A549 (cell line): ENCODE measurements at regions of chr22 and their contacts with region 1.

Region 1: DNA sequence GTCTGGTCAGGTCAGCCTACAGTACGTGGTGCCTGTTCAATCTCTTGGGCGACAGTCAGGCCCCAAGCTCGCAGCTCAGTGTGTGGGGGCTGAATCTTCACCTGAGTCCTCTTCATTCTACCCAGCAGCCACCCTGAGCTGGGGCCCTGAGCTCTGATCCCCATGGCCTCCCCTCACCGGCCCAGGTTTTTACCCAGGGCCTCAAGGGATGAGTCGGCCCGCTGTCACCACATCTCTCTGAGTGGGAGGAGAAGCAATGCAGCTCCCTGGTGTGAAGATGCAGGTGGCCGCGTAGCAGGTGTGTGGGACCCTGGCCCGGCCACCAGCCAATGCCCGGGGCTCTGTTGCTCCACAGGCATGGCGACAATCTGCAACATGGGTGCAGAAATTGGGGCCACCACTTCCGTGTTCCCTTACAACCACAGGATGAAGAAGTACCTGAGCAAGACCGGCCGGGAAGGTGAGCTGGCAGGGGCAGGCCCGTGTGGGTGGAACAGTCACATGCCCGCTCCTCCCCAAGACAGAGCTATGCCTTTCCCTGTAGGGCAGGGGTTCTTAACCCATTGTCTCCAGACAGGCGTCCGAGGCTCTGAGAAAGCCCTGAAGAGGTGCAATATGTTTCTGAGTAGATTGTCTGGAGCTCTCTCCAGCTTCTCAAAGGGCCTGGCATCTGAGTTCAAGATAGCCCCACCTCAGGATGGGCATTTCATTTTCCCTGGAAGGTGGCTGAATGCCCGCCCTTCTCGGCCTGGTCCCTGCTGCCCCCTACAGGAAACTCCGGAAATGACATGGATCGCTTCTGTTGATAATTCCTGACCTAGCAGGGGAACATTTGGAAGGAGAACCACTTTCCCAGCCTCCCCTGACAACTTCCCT is 26.9 kb downstream of the POLR3H start:
- DNase-seq: peak; percentile 48 to 63
- ATAC-seq: peak; percentile 43 to 68
- H3K4me3 ChIP-seq: no peak overlapping the region
- H3K27ac ChIP-seq: no peak overlapping the region; a peak in 1 of 6 replicates
- H3K4me1 ChIP-seq: peaks cover 11% of the 10 kb centered on the region
- CTCF ChIP-seq: peak; percentile 70
- EP300 ChIP-seq: no peak
- POLR2A ChIP-seq: no peak
- RAD21 ChIP-seq: peak; percentile 81 to 91

Region 2: DNA sequence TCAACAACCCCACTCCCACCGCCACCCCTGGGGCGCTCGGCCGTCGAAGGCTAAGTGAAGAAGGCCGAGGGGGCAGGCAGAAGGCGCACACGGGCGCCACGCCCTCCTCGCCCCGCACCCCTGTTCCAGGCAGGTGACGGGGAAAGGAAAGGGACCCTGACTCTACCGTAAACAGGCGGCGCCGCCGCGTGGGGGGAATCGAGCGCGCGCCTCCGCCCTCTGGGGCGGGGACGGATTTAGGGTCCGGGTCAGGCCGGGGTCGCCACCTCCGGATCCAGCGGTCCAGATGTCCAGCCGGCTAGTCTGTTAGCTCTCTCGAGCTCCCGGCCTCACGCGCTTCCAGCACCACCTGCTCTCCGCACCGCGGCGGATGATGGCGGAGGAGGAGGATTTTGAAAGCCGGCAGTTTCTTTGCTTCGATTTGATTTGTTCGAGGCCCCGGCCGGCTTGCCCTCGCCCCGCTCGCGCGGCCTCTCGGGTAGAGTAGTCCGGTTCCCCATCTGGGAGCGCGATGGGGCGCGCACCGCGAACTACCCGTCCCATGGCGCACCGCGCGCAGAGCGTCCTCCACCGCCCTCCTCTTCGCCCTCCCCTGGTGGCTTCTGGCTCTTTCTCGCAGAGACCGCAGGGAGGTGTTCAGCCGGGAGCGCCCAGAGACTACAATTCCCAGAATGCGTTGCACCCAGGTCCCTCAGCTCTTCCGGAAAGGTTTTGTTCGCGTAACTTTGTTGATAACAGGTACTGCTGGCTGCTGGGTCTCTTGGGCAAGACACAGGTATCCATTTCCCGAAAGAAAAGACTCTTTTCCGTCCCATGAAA is 231.4 kb before region 1 on chr22 and contains the start of gene RANGAP1:
- CTCF ChIA-PET with region 1: no interaction called
- POLR2A ChIA-PET with region 1: no interaction called
- DNase-seq: peak; percentile 92 to 96
- ATAC-seq: peak; percentile 95 to 97
- H3K4me3 ChIP-seq: peak within 1 kb of the TSS; percentile 97
- H3K27ac ChIP-seq: peak within 1 kb of the TSS; percentile 93 to 96
- H3K4me1 ChIP-seq: peaks cover 52% of the 10 kb centered on the region
- CTCF ChIP-seq: no peak
- EP300 ChIP-seq: no peak
- POLR2A ChIP-seq: peak; percentile 72
- RAD21 ChIP-seq: 0 out of 5 replicates have a peak, but pooled peaks of 1 of the 2 experiments have one; percentile 14
- polyA plus RNA-seq, gene RANGAP1: 43.0 and 44.9 TPM in 2 replicates

Region 3: GRCh38 chr22:41397143-41397811 is 120.1 kb before region 1 on chr22:
- CTCF ChIA-PET with region 1: interaction called, 196 read pairs
- POLR2A ChIA-PET with region 1: interaction called, 4 read pairs
- DNase-seq: no peak
- ATAC-seq: no peak
- H3K4me3 ChIP-seq: no peak overlapping the region
- H3K27ac ChIP-seq: 0 out of 6 replicates have a peak overlapping the region, but pooled peaks of 1 of the 2 experiments have one; percentile 26
- H3K4me1 ChIP-seq: peaks cover 9% of the 10 kb centered on the region
- CTCF ChIP-seq: no peak
- EP300 ChIP-seq: no peak
- POLR2A ChIP-seq: no peak
- RAD21 ChIP-seq: no peak

Region 4: GRCh38 chr22:41411021-41411851 is 106.2 kb before region 1 on chr22:
- CTCF ChIA-PET with region 1: interaction called, 196 read pairs
- POLR2A ChIA-PET with region 1: no interaction called
- DNase-seq: no peak
- ATAC-seq: no peak
- H3K4me3 ChIP-seq: no peak overlapping the region
- H3K27ac ChIP-seq: peak overlapping the region; percentile 32 to 40; a peak in 2 of 6 replicates
- H3K4me1 ChIP-seq: peaks cover 16% of the 10 kb centered on the region; the same call in 2 of the 3 replicates
- CTCF ChIP-seq: no peak
- EP300 ChIP-seq: no peak
- POLR2A ChIP-seq: no peak
- RAD21 ChIP-seq: no peak

Region 5: GRCh38 chr22:41461901-41462300 is 55.5 kb before region 1 on chr22:
- CTCF ChIA-PET with region 1: interaction called, 12 read pairs
- POLR2A ChIA-PET with region 1: no interaction called
- DNase-seq: no peak
- ATAC-seq: no peak
- H3K4me3 ChIP-seq: no peak overlapping the region
- H3K27ac ChIP-seq: no peak overlapping the region
- H3K4me1 ChIP-seq: peaks cover under 1% of the 10 kb centered on the region; the same call in 1 of the 3 replicates
- CTCF ChIP-seq: no peak
- EP300 ChIP-seq: no peak
- POLR2A ChIP-seq: no peak
- RAD21 ChIP-seq: no peak

Region 6: GRCh38 chr22:41479671-41480396 is 37.6 kb before region 1 on chr22:
- CTCF ChIA-PET with region 1: interaction called, 25 read pairs
- POLR2A ChIA-PET with region 1: no interaction called
- DNase-seq: no peak
- ATAC-seq: peak; percentile 13 to 26; a peak in 3 of 6 replicates
- H3K4me3 ChIP-seq: no peak overlapping the region
- H3K27ac ChIP-seq: no peak overlapping the region
- H3K4me1 ChIP-seq: no peaks in the 10 kb centered on the region; the same call in 2 of the 3 replicates
- CTCF ChIP-seq: no peak
- EP300 ChIP-seq: no peak
- POLR2A ChIP-seq: no peak
- RAD21 ChIP-seq: no peak

Region 7: DNA sequence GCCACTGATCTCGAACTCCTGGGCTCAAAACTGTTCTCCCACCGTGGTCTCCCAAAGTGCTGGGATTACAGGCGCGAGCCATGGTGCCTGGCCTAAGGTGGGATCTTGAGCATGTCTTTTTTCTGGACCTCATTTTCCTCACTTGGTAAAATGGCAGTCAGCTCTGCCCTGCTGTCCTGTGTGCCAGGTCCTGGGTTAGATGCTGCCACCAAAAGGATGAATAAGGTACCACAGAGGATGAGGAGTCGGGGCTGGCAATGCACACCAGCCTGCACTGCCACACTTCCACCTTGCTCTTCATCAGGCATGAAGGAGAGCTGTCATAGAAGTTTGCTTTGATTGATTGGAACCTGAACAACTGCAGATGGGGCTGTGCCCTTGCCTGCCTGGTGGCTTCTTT is 16.2 kb before region 1 on chr22:
- CTCF ChIA-PET with region 1: interaction called, 38 read pairs
- POLR2A ChIA-PET with region 1: no interaction called
- DNase-seq: peak; percentile 33 to 44
- ATAC-seq: peak; percentile 76 to 91; a peak in 5 of 6 replicates
- H3K4me3 ChIP-seq: no peak overlapping the region
- H3K27ac ChIP-seq: no peak overlapping the region
- H3K4me1 ChIP-seq: no peaks in the 10 kb centered on the region
- CTCF ChIP-seq: peak; percentile 20; the same call in 1 of the 3 replicates
- EP300 ChIP-seq: no peak
- POLR2A ChIP-seq: no peak
- RAD21 ChIP-seq: peak; percentile 38 to 51; a peak in 3 of 5 replicates

Region 8: GRCh38 chr22:41636467-41636866 is 119.1 kb after region 1 on chr22:
- CTCF ChIA-PET with region 1: no interaction called
- POLR2A ChIA-PET with region 1: no interaction called
- DNase-seq: peak in 1 of 2 experiments; percentile 33
- ATAC-seq: peak; percentile 80 to 89; a peak in 5 of 6 replicates
- H3K4me3 ChIP-seq: no peak overlapping the region
- H3K27ac ChIP-seq: peak overlapping the region; percentile 54 to 62; a peak in 3 of 6 replicates
- H3K4me1 ChIP-seq: peaks cover 37% of the 10 kb centered on the region
- CTCF ChIP-seq: no peak
- EP300 ChIP-seq: no peak
- POLR2A ChIP-seq: no peak
- RAD21 ChIP-seq: no peak